ENCODE measurements at regions of chr19 and their contacts with region 1.

Region 1: DNA sequence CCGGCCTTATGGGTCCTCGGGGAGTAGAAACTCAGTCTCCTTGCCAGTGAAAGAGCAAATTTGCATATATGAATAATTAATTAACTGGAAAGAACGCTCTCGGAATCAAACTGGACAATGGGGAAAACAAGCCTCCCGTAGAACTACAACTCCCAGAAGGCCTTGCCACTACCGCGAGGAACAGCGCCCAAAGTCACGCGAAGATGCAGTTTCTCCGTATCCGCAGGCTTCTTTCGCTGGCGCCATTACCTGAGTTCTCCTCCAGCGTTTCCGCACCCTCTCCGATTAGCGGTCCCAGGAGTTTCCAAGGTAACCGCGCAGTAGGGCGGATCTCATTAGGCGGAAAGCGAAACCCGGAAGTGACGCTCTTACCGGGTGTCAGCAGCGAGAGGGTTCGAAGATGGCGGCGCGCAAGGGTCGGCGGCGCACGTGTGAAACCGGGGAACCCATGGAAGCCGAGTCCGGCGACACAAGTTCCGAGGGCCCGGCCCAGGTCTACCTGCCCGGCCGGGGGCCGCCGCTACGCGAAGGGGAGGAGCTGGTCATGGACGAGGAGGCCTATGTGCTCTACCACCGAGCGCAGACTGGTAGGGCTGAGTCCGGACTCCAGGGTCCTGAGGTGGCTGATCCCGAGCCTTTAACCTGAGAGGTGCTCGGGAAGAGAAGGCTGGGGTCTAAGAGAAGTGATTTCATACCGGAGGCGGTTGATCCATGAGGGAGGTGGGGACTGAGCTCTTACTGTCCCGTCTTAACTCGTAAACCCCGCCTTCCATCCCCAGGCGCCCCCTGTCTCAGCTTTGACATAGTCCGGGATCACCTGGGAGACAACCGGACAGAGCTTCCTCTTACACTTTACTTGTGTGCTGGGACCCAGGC is at the start of gene GRWD1:
- H3K4me3 Mint-ChIP-seq: peak within 1 kb of the TSS; percentile 96
- H3K27ac Mint-ChIP-seq: peak within 1 kb of the TSS; percentile 98
- H3K4me1 Mint-ChIP-seq: peaks cover 38% of the 10 kb centered on the region
- H3K27me3 Mint-ChIP-seq: peaks cover 30% of the 10 kb centered on the region

Region 2: GRCh38 chr19:48468775-48469288 is 23.0 kb after region 1 on chr19:
- intact Hi-C with region 1: loop called (anchors 1 kb)
- H3K4me3 Mint-ChIP-seq: peak overlapping the region; percentile 80
- H3K27ac Mint-ChIP-seq: peak overlapping the region; percentile 87
- H3K4me1 Mint-ChIP-seq: peaks cover 47% of the 10 kb centered on the region
- H3K27me3 Mint-ChIP-seq: peaks cover 1% of the 10 kb centered on the region

Region 3: GRCh38 chr19:48608798-48609263 is 163.0 kb after region 1 on chr19:
- intact Hi-C with region 1: no loop called
- H3K4me3 Mint-ChIP-seq: no peak overlapping the region
- H3K27ac Mint-ChIP-seq: no peak overlapping the region
- H3K4me1 Mint-ChIP-seq: peaks cover 12% of the 10 kb centered on the region
- H3K27me3 Mint-ChIP-seq: no peaks in the 10 kb centered on the region

Measured in dendritic cell treated with granulocyte-macrophage colony-stimulating factor and Interleukin-4, amounts not matched to agents 40 ng/mL and 50 ng/mL, for 4 days (primary cell).